ENCODE measurements at regions of chr1 and their contacts with region 1.

Region 1: DNA sequence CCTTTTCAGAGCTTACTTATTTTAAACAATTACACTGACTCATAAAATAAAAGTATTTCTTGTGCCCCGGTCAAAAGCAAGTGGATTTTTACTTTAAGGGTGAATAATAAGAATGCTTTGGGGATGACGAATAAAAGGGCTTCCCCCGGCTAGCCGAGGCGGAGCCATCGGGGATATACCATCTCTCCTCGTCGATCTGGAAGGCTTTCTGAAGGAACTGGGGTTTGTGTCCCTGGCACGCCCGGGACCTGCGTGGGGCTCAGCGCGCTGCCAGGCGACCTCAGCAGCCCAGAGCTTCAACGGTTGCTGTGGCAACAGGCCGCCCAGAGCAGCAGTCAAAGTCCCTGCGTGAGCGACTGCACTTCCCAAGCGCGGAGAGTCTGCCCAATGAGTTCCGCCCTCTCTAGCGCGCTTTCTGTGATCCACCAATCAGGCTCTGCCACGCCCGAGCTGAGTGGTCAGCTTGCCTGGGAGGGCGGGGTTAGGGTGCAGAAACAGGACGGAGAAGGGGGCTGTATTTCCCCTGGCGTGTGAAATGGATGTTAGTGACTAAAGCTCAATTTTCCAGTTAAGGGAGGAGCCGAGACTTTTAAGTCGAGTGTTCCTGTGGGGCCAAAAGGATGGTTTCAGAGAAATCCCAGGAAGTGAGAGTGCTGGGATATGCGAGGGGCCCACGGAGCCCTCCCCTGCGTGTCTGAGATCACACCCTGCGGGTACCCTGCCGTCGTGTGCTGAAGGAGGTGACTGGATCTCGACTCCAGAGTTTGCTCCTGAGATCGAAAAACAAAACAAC is 33.0 kb upstream of the MGST3 start:
- DNase-seq: peak; percentile 98
- H3K4me3 Mint-ChIP-seq: peak overlapping the region; percentile 91
- H3K27ac Mint-ChIP-seq: peak overlapping the region; percentile 80
- H3K4me1 Mint-ChIP-seq: peaks cover 28% of the 10 kb centered on the region
- H3K27me3 Mint-ChIP-seq: peaks cover 42% of the 10 kb centered on the region

Region 2: DNA sequence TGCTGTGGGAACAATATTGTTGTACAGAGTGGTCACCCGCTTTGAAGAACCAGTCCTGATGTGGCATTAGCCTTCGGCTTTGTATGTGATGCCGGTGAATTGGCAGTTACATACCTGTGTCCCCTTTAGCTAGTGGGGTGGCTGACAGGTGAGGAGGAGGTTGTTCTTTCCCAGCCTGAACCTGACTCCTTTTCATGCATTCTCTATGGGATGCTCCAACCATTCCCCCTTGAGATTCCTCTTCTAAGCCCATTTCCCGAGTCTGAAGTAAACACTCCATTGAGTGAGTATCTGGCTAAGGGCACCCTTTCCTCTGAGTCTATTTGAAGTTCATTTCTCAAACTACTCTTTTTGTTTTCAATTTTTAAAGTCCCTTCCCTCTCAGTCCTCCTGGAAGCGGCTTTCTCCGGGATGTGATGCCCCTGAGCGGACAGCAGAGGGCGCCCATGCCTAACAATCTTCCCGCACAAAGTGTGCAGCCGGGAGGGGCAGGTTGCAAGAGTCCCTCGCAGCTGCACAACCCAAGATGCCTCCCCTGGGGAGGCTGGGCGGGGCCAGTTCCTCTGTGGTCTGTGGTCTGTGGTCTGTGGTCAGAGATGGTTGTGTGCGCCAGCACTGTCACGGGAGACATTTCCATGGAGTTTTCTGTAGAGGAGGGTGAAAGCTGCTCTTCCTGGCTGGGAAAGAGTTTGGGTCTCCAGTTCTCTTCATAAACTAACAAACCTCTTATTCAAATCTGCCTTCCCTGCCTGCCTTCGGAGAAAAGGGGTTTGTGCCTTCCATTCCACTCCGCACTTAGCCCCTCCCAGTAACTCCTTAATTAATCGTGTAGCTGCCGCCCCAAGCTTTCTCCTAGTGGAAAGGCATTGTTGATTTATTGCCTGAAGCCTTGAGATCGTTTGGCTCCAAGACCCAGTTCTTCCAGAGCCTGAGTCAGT is 205.2 kb before region 1 on chr1:
- intact Hi-C with region 1: loop called (anchors 1 kb)
- DNase-seq: peak; percentile 98
- H3K4me3 Mint-ChIP-seq: peak overlapping the region; percentile 74
- H3K27ac Mint-ChIP-seq: peak overlapping the region; percentile 93
- H3K4me1 Mint-ChIP-seq: peaks cover 13% of the 10 kb centered on the region
- H3K27me3 Mint-ChIP-seq: peaks cover 90% of the 10 kb centered on the region

Region 3: GRCh38 chr1:165496501-165496900 is 101.6 kb before region 1 on chr1:
- intact Hi-C with region 1: no loop called
- DNase-seq: no peak
- H3K4me3 Mint-ChIP-seq: no peak overlapping the region
- H3K27ac Mint-ChIP-seq: no peak overlapping the region
- H3K4me1 Mint-ChIP-seq: peaks cover 3% of the 10 kb centered on the region
- H3K27me3 Mint-ChIP-seq: peaks cover 26% of the 10 kb centered on the region

Region 4: GRCh38 chr1:165580941-165581871 is 16.9 kb before region 1 on chr1:
- intact Hi-C with region 1: no loop called
- DNase-seq: no peak
- H3K4me3 Mint-ChIP-seq: no peak overlapping the region
- H3K27ac Mint-ChIP-seq: no peak overlapping the region
- H3K4me1 Mint-ChIP-seq: no peaks in the 10 kb centered on the region
- H3K27me3 Mint-ChIP-seq: peaks cover 49% of the 10 kb centered on the region

Region 5: GRCh38 chr1:165630629-165631341 is 32.7 kb after region 1 on chr1 and contains the start of gene MGST3:
- intact Hi-C with region 1: loop called (anchors 1 kb)
- DNase-seq: peak; percentile 98
- H3K4me3 Mint-ChIP-seq: no peak within 1 kb of the TSS
- H3K27ac Mint-ChIP-seq: no peak within 1 kb of the TSS
- H3K4me1 Mint-ChIP-seq: peaks cover 17% of the 10 kb centered on the region
- H3K27me3 Mint-ChIP-seq: peaks cover 10% of the 10 kb centered on the region
- total RNA-seq, gene MGST3: 25.7 and 28.1 TPM in 2 replicates

Region 6: DNA sequence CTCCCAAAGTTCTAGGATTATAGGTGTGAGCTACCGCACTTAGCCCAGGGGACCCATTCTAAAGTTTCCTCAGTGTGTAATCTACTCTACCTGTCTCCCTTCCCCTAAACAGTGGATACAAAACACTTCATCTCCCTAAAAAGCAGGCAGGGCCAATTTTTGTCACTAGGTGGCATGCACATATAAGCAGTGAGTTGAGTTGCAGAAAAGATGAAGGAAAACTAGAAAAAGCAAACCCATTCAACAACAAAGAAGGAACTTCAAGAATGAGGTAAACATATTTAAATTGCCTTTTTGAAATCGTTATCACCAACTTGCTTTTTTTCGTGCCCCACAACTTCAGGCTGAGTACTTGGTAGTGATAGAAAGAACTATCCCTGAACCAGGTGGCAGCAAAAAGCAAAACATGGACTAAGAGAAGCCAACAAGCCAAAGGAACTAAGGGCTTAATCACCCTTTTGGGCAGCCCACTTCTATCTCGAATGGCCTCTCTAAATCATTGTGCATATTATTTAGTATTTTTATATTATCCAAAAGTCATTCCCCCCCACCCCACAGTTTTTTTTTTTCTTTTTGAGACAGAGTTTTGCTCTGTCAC is 119.9 kb after region 1 on chr1:
- intact Hi-C with region 1: loop called (anchors 1 kb)
- DNase-seq: peak; percentile 82
- H3K4me3 Mint-ChIP-seq: no peak overlapping the region
- H3K27ac Mint-ChIP-seq: no peak overlapping the region
- H3K4me1 Mint-ChIP-seq: no peaks in the 10 kb centered on the region
- H3K27me3 Mint-ChIP-seq: peaks cover 7% of the 10 kb centered on the region

Region 7: GRCh38 chr1:165914136-165914798 is 316.2 kb after region 1 on chr1:
- intact Hi-C with region 1: loop called (anchors 1 kb)
- DNase-seq: peak; percentile 93
- H3K4me3 Mint-ChIP-seq: no peak overlapping the region
- H3K27ac Mint-ChIP-seq: no peak overlapping the region
- H3K4me1 Mint-ChIP-seq: peaks cover 5% of the 10 kb centered on the region
- H3K27me3 Mint-ChIP-seq: no peaks in the 10 kb centered on the region

Region 8: GRCh38 chr1:166489670-166490436 is 891.8 kb after region 1 on chr1:
- intact Hi-C with region 1: loop called (anchors 5 kb)
- DNase-seq: peak; percentile 85
- H3K4me3 Mint-ChIP-seq: no peak overlapping the region
- H3K27ac Mint-ChIP-seq: no peak overlapping the region
- H3K4me1 Mint-ChIP-seq: peaks cover 9% of the 10 kb centered on the region
- H3K27me3 Mint-ChIP-seq: peaks cover 1% of the 10 kb centered on the region